IMR-90 (cell line): ENCODE measurements at regions of chr14 and their contacts with region 1.

Region 1: DNA sequence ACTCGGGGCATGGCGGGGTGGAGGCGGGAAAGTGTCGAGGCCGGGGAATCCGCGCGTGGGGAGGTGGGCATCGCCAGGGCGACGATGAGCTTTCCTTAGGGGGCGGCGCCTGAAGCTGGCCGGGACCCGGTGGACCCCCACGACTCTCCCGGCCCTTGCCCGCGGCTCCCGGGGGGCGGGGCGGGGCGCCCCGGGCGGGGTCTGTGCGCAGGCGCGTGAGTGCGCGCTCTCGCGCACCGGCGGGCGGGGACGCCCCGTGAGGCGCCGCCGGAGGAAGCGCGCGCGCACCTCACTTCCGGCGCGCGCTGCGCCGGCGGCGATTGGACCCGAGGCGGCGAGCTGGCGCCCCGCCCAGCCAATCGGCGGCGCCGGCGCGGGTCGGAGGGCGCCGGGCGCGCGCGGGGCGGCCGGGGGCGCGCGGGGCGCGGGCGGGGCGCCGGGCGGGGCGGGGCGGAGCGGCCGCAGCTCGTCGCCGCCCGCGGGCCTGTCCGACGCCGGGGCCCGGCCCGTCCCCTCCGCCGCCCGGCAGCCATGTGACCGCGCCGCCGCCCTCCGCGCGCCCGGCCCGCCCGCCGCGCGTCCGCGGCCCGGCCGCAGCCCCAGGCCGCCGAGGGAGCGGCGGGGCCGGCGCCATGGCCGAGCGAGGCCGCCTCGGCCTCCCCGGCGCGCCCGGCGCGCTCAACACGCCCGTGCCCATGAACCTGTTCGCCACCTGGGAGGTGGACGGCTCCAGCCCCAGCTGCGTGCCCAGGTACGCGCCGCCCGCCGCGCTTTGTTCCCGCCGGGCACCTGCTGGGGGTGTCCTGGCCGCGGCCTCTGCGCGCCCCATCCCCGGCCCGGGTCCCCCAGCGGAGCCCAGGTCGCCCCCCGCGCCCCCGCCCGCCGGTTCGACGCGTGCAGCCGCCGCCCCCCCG is at the start of gene PACS2:
- DNase-seq: peak; percentile 85
- ATAC-seq: peak; percentile 88
- H3K4me3 ChIP-seq: peak within 1 kb of the TSS; percentile 100
- H3K27ac ChIP-seq: peak within 1 kb of the TSS; percentile 81
- H3K4me1 ChIP-seq: peaks cover 26% of the 10 kb centered on the region
- H3K27me3 ChIP-seq: no peaks in the 10 kb centered on the region
- CTCF ChIP-seq: no peak
- POLR2A ChIP-seq: no peak
- RAD21 ChIP-seq: no peak
- total RNA-seq, gene PACS2: 15.3 and 15.6 TPM in 2 replicates

Region 2: GRCh38 chr14:104985675-104986525 is 328.6 kb before region 1 on chr14 and contains the start of gene CLBA1:
- CTCF ChIA-PET with region 1: no interaction called
- POLR2A ChIA-PET with region 1: interaction called, 15 read pairs
- dilution Hi-C with region 1: no loop called
- in situ Hi-C with region 1: no loop called
- intact Hi-C with region 1: no loop called
- DNase-seq: peak; percentile 87
- ATAC-seq: peak; percentile 98
- H3K4me3 ChIP-seq: peak within 1 kb of the TSS; percentile 71
- H3K27ac ChIP-seq: no peak within 1 kb of the TSS; the same call in 1 of the 2 replicates
- H3K4me1 ChIP-seq: peaks cover 3% of the 10 kb centered on the region; the same call in 1 of the 2 replicates
- H3K27me3 ChIP-seq: no peaks in the 10 kb centered on the region
- CTCF ChIP-seq: no peak
- POLR2A ChIP-seq: no peak
- RAD21 ChIP-seq: no peak; the same call in 1 of the 2 replicates
- total RNA-seq, gene CLBA1: 2.2 and 2.7 TPM in 2 replicates

Region 3: DNA sequence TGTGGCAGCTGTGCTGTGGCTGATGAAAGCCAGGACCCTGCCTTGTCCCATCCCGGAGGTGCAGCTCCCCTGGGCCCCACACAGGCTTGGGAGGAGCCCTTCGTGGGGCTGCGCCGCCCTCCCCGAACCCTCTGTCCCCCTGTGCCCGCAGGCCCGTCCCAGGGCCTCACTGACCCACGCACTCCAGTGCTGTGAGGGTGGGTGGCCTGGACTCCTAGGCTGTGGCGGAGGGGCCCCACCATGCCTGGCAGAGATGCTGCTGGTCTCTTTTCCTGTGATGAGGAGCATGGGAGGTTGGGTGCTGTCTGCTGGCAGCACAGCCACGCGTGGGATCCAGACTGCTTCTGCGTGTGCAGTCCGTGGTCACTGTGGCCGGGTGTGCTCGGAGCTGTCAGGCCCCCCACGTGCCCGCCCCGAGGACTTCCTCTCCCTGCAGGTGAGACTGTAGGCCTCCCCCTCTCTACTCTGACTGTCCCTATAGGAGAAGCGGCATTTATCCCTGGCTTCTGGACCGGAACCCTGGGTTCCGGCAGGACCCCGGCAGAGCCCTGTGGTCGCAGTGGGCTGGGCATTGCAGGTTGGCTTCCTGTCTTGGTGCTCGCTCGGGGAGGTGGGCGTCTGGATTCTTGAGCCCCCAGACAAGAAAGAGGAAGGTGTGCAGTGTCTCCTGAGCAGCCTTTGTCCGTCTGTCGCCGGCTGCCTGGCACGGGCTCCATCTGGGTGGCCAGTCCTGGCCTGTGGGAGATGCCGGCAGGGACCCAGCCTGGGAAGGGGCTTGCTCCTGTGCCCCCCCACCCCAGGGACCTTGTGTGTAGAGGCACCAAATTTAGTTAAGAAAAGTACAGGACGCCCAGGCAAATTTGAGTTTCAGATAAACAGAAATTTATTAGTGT is 107.4 kb after region 1 on chr14:
- CTCF ChIA-PET with region 1: no interaction called
- POLR2A ChIA-PET with region 1: no interaction called
- dilution Hi-C with region 1: no loop called
- in situ Hi-C with region 1: no loop called
- intact Hi-C with region 1: no loop called
- DNase-seq: no peak
- ATAC-seq: no peak
- H3K4me3 ChIP-seq: no peak overlapping the region
- H3K27ac ChIP-seq: no peak overlapping the region
- H3K4me1 ChIP-seq: peaks cover 18% of the 10 kb centered on the region
- H3K27me3 ChIP-seq: no peaks in the 10 kb centered on the region
- CTCF ChIP-seq: no peak
- POLR2A ChIP-seq: no peak
- RAD21 ChIP-seq: no peak